Mammary epithelial cell (primary cell): ENCODE measurements at regions of chr12 and their contacts with region 1.

Region 1: GRCh38 chr12:6039894-6040568 is 84.4 kb downstream of the VWF start:
- DNase-seq: peak; percentile 48
- H3K4me3 ChIP-seq: no peak overlapping the region
- H3K27ac ChIP-seq: no peak overlapping the region
- H3K4me1 ChIP-seq: peaks cover 8% of the 10 kb centered on the region
- H3K27me3 ChIP-seq: no peaks in the 10 kb centered on the region
- CTCF ChIP-seq: peak; percentile 93 to 98

Region 2: GRCh38 chr12:4857472-4858291 is 1182.3 kb before region 1 on chr12:
- CTCF ChIA-PET with region 1: no interaction called
- dilution Hi-C with region 1: no loop called
- in situ Hi-C with region 1: no loop called
- intact Hi-C with region 1: loop called (anchors 10 kb)
- DNase-seq: peak; percentile 39
- H3K4me3 ChIP-seq: no peak overlapping the region
- H3K27ac ChIP-seq: no peak overlapping the region
- H3K4me1 ChIP-seq: no peaks in the 10 kb centered on the region
- H3K27me3 ChIP-seq: no peaks in the 10 kb centered on the region
- CTCF ChIP-seq: peak; percentile 88 to 93

Region 3: GRCh38 chr12:5171701-5172100 is 868.3 kb before region 1 on chr12:
- CTCF ChIA-PET with region 1: no interaction called
- dilution Hi-C with region 1: no loop called
- in situ Hi-C with region 1: no loop called
- intact Hi-C with region 1: loop called (anchors 10 kb)
- DNase-seq: peak; percentile 44
- H3K4me3 ChIP-seq: no peak overlapping the region
- H3K27ac ChIP-seq: no peak overlapping the region
- H3K4me1 ChIP-seq: peaks cover 6% of the 10 kb centered on the region
- H3K27me3 ChIP-seq: no peaks in the 10 kb centered on the region
- CTCF ChIP-seq: peak; percentile 76 to 78

Region 4: GRCh38 chr12:5745265-5745888 is 294.7 kb before region 1 on chr12:
- CTCF ChIA-PET with region 1: no interaction called
- dilution Hi-C with region 1: no loop called
- in situ Hi-C with region 1: no loop called
- intact Hi-C with region 1: loop called (anchors 2 kb)
- DNase-seq: peak; percentile 18
- H3K4me3 ChIP-seq: no peak overlapping the region
- H3K27ac ChIP-seq: no peak overlapping the region
- H3K4me1 ChIP-seq: no peaks in the 10 kb centered on the region
- H3K27me3 ChIP-seq: no peaks in the 10 kb centered on the region
- CTCF ChIP-seq: peak; percentile 58 to 84

Region 5: DNA sequence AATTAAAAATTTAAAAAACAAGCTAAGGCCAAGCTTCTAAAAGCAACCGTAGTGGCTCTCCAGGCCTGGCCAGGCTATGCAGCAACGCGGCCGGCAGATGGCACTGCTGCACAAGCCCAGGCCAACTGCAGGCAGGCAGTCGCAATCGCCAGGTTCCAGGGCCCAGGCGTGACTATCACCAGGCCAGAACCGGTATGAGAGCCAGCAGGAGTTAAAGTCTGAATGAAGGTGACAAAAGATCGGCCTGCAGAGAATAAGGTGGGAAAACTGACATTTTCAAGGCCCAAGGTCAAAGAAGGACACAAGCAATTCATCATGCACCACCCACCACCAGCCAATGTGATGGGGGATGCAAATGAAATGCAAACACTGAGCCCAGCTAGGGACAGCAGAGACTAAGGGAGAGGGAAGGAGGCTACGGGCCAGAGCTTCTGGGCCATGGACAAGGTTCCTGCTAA is 51.3 kb before region 1 on chr12:
- CTCF ChIA-PET with region 1: interaction called, 42 read pairs
- dilution Hi-C with region 1: no loop called
- in situ Hi-C with region 1: loop called (anchors 5 to 10 kb)
- intact Hi-C with region 1: loop called (anchors 1 kb)
- DNase-seq: peak; percentile 54
- H3K4me3 ChIP-seq: no peak overlapping the region
- H3K27ac ChIP-seq: no peak overlapping the region
- H3K4me1 ChIP-seq: no peaks in the 10 kb centered on the region
- H3K27me3 ChIP-seq: no peaks in the 10 kb centered on the region
- CTCF ChIP-seq: peak; percentile 97

Region 6: DNA sequence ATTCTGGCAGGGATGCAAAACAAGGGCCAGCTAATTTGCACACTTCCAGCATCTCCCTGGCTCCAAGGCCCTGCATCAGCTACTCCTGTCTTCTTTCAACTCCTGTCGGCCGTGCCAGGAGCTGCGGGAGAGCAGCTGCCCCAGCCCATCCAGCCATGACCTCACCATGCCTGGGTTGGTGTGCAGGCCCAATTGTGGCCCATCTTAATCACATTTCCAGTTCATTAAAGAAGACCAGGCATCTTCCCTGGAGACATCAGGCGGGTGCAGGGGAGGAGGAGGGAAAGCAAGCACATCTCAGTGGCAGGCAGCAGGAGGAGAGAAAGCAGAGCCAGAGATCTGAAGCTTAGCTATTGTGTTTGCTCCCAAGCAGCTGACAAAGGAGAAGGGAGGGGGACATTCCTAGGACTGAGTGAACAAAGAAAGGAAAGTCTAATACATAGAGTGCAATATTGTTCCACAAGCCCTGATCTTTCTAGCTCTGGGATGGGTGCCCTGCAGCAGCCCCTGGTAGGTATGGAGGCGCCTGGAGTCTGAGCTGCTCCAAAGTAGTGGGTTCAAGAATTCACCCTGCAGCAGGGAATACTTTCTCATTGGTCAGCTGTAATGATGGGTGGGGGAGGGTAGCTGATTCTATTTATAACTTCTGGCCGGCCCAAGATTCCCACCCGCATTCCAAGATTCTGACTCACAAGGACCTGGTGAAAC is 44.4 kb after region 1 on chr12:
- CTCF ChIA-PET with region 1: no interaction called
- dilution Hi-C with region 1: no loop called
- in situ Hi-C with region 1: no loop called
- intact Hi-C with region 1: no loop called
- DNase-seq: peak; percentile 64
- H3K4me3 ChIP-seq: no peak overlapping the region
- H3K27ac ChIP-seq: no peak overlapping the region
- H3K4me1 ChIP-seq: peaks cover 19% of the 10 kb centered on the region
- H3K27me3 ChIP-seq: no peaks in the 10 kb centered on the region
- CTCF ChIP-seq: no peak